Prostate gland (tissue), 2 donors: ENCODE measurements at regions of chr21 and their contacts with region 1.

Region 1: GRCh38 chr21:28336314-28336713 is 656.4 kb downstream of the LTN1 start:
- DNase-seq: peak; percentile 10
- H3K4me3 ChIP-seq: no peak overlapping the region
- H3K27ac ChIP-seq: no peak overlapping the region
- H3K4me1 ChIP-seq: no peaks in the 10 kb centered on the region
- H3K27me3 ChIP-seq: no peaks in the 10 kb centered on the region
- CTCF ChIP-seq: peak in 2 of 4 experiments; percentile 55 to 58
- POLR2A ChIP-seq: no peak

Region 2: GRCh38 chr21:28069450-28069923 is 266.8 kb before region 1 on chr21:
- intact Hi-C with region 1: loop called (anchors 10 kb)
- DNase-seq: no peak
- H3K4me3 ChIP-seq: no peak overlapping the region
- H3K27ac ChIP-seq: no peak overlapping the region
- H3K4me1 ChIP-seq: no peaks in the 10 kb centered on the region
- H3K27me3 ChIP-seq: no peaks in the 10 kb centered on the region
- CTCF ChIP-seq: no peak
- POLR2A ChIP-seq: no peak